Activated T-helper 2 cell treated with anti-CD3 and anti-CD28 coated beads, Interferon-gamma antibody, Interleukin-2, Interleukin-4, amounts not matched to agents 10 μg/mL and 5 μg/mL and 100 μg/mL, durations not matched to agents 14 hours and 24 hours and 36 hours (primary cell): ENCODE measurements at regions of chr9 and their contacts with region 1.

Region 1: GRCh38 chr9:4604678-4605095 is 57.4 kb upstream of the PLPP6 start:
- DNase-seq: peak; percentile 42
- H3K4me3 Mint-ChIP-seq: no peak overlapping the region
- H3K27ac Mint-ChIP-seq: no peak overlapping the region
- H3K4me1 Mint-ChIP-seq: peaks cover 9% of the 10 kb centered on the region
- H3K27me3 Mint-ChIP-seq: no peaks in the 10 kb centered on the region

Region 2: DNA sequence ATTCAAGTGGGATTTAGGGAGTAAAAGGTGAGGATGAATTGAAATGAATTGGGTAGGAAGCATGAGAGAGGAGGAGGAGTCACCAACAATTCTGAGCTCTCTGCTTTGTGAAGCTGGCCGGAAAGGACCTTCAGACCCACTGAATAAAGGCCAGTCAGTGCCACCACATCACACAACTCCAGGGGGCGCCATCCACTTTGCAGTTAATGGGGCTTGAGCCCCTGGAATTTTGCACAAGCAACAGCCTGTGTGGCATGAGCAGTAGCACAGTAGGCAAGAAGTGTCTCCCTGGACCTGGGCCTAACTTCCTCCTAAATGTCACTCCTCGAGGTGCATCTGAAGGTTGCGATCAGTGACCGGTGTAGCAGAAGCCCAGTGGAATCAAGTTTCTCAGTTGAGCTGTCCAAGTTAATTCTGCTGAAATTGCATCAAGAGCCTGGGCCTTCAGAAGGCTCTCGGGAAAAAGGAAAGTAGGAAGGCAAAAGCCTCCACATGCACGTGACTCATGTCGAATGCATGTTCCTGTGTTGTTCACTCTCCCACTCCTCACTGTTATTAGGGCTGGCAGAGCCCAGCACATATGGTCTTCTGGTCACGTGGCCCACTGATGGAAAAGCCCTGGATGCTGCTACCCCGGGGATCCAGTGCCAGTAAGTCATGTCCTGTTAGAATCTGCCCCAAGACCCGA is 277.0 kb before region 1 on chr9:
- intact Hi-C with region 1: no loop called
- DNase-seq: no peak
- H3K4me3 Mint-ChIP-seq: no peak overlapping the region
- H3K27ac Mint-ChIP-seq: no peak overlapping the region
- H3K4me1 Mint-ChIP-seq: no peaks in the 10 kb centered on the region
- H3K27me3 Mint-ChIP-seq: peaks cover 3% of the 10 kb centered on the region

Region 3: GRCh38 chr9:4590430-4591122 is 14.1 kb before region 1 on chr9:
- intact Hi-C with region 1: no loop called
- DNase-seq: no peak
- H3K4me3 Mint-ChIP-seq: no peak overlapping the region
- H3K27ac Mint-ChIP-seq: no peak overlapping the region
- H3K4me1 Mint-ChIP-seq: peaks cover 5% of the 10 kb centered on the region
- H3K27me3 Mint-ChIP-seq: peaks cover 7% of the 10 kb centered on the region

Region 4: GRCh38 chr9:4642351-4642750 is 37.7 kb after region 1 on chr9:
- intact Hi-C with region 1: no loop called
- DNase-seq: no peak
- H3K4me3 Mint-ChIP-seq: no peak overlapping the region
- H3K27ac Mint-ChIP-seq: no peak overlapping the region
- H3K4me1 Mint-ChIP-seq: no peaks in the 10 kb centered on the region
- H3K27me3 Mint-ChIP-seq: peaks cover 2% of the 10 kb centered on the region

Region 5: GRCh38 chr9:4654084-4654483 is 49.4 kb after region 1 on chr9:
- intact Hi-C with region 1: no loop called
- DNase-seq: no peak
- H3K4me3 Mint-ChIP-seq: no peak overlapping the region
- H3K27ac Mint-ChIP-seq: no peak overlapping the region
- H3K4me1 Mint-ChIP-seq: peaks cover 12% of the 10 kb centered on the region
- H3K27me3 Mint-ChIP-seq: peaks cover 20% of the 10 kb centered on the region

Region 6: DNA sequence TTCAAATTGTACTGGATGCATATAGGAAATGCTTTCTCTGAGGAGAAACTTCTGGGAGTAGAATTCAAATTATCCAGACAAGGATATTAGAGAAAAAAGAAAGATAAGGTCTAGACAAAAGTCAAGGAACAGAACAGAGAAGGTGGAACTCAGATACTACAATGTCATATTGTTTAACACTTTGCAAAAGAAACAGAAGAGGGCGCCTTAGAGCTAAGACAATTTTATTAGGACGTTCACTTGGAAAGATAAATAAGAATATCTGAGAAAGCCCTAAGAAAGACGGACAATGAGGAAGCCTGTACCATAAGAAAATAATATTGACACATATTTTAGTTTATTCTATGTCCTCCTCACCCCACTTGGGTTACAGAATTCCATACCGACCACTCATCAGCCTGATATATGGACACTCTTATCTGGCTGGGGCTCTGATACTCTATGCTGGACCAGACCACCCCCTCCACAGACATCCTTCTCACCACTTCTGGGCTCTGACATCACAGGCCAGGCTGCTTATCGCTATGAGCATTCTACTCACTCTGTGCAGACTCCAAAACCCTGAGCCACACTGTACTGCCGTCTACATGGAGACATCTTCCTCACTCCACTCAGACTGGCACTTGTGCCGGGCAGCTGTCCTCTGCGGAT is 145.5 kb after region 1 on chr9:
- intact Hi-C with region 1: loop called (anchors 10 kb)
- DNase-seq: no peak
- H3K4me3 Mint-ChIP-seq: no peak overlapping the region
- H3K27ac Mint-ChIP-seq: no peak overlapping the region
- H3K4me1 Mint-ChIP-seq: peaks cover 12% of the 10 kb centered on the region
- H3K27me3 Mint-ChIP-seq: peaks cover 12% of the 10 kb centered on the region